MCF 10A (cell line): ENCODE measurements at regions of chr5 and their contacts with region 1.

Region 1: DNA sequence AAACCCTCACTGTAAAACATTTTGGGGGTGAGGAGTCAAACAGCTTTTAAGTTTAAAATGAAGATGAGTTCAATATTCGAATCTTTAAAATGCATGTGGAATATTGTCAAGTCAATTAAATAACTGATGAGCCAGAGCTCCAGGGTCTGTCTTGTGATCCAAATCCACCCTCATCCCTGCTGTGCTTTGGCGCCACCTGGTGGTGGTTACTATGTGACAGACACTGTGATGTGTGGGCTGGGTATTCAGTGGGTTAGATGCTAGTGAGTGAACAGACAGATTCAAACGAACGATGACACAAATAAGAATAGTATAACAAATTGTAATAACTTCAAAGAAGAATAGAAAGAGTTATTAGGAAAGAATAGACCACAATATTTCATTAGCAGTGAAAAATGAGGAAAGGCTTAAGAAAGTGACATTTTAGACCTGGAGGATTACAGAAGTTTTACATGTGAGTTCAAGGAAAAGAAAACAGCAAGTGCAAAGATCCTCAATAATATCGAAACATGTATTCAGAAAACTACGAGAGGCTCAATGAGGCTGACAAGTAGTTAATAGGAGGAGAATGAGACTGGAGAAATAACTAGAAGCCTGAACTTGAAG is 51.4 kb upstream of the CHSY3 start:
- DNase-seq: peak; percentile 94
- H3K4me3 Mint-ChIP-seq: no peak overlapping the region
- H3K27ac Mint-ChIP-seq: no peak overlapping the region
- H3K4me1 Mint-ChIP-seq: peaks cover 10% of the 10 kb centered on the region
- H3K27me3 Mint-ChIP-seq: peaks cover 11% of the 10 kb centered on the region
- CTCF ChIP-seq: peak; percentile 99

Region 2: DNA sequence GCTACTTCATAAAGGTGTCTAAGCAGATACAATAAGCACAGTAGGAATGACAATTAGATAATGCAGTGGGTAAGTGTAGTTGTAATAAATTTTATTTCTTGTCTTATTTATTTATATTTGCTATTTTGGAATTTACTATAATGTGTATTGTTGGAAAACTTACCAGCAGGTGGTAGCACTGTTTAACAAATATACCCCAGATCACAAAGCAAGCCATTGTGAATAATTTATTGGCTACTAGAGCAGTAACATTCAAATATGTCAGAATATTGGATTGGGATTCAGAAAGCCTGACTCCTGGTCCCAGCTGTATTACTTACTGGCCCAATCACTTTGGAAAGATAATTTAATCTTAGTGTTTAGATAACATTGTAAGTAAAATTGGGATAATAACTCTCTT is 680.3 kb before region 1 on chr5:
- CTCF ChIA-PET with region 1: interaction called, 3 read pairs
- POLR2A ChIA-PET with region 1: no interaction called
- intact Hi-C with region 1: loop called (anchors 5 kb)
- DNase-seq: peak; percentile 45
- H3K4me3 Mint-ChIP-seq: no peak overlapping the region
- H3K27ac Mint-ChIP-seq: no peak overlapping the region
- H3K4me1 Mint-ChIP-seq: no peaks in the 10 kb centered on the region
- H3K27me3 Mint-ChIP-seq: peaks cover 50% of the 10 kb centered on the region
- CTCF ChIP-seq: peak; percentile 38

Region 3: GRCh38 chr5:129541644-129542251 is 311.1 kb before region 1 on chr5:
- CTCF ChIA-PET with region 1: no interaction called
- POLR2A ChIA-PET with region 1: no interaction called
- intact Hi-C with region 1: loop called (anchors 2 kb)
- DNase-seq: peak; percentile 74
- H3K4me3 Mint-ChIP-seq: no peak overlapping the region
- H3K27ac Mint-ChIP-seq: no peak overlapping the region
- H3K4me1 Mint-ChIP-seq: no peaks in the 10 kb centered on the region
- H3K27me3 Mint-ChIP-seq: peaks cover 16% of the 10 kb centered on the region
- CTCF ChIP-seq: peak; percentile 60

Region 4: DNA sequence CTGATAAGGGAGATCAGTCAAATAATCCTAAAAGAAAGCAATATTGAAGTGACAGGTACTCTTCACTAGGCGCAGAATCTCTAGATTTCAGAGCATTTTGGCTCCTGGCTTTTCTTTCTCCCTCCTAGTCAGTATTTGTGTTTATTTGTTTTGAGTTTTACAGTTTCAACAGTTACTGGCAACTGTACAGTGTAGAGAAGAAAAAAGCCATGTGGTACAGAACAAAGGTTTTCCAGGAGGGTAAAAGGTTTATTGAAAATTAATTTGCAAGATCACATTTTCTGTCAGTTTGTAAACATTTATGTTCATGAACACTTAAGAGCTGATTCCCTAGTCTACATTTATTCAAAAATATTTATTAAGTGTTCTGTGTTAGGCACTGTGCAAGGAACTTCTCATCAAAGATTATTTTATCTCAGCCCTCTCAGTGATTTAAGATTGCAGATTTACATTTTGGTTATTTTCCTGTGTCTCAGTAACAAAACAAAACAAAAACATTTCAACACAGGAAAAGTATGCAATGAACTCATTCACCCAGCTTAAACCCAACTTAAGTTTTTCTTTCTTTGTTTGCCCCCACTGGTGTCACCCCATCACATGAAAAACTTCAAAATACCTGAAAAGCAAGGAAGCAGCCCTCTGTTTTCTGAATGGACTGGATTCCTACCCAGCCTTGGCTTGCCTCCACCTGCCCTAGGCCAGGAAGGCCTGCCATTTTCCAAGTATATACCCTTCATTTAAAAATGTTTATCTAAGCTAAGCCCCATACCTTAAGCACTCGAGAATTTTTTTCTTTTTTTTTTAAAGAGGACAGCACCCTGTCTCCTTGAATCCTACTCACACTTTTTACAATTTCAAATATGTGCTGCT is 92.0 kb before region 1 on chr5:
- CTCF ChIA-PET with region 1: interaction called, 931 read pairs
- POLR2A ChIA-PET with region 1: no interaction called
- intact Hi-C with region 1: no loop called
- DNase-seq: no peak
- H3K4me3 Mint-ChIP-seq: no peak overlapping the region
- H3K27ac Mint-ChIP-seq: no peak overlapping the region
- H3K4me1 Mint-ChIP-seq: no peaks in the 10 kb centered on the region
- H3K27me3 Mint-ChIP-seq: peaks cover 11% of the 10 kb centered on the region
- CTCF ChIP-seq: no peak

Region 5: GRCh38 chr5:129804705-129805104 is 48.1 kb before region 1 on chr5:
- CTCF ChIA-PET with region 1: interaction called, 34 read pairs
- POLR2A ChIA-PET with region 1: interaction called, 3 read pairs
- intact Hi-C with region 1: no loop called
- DNase-seq: no peak
- H3K4me3 Mint-ChIP-seq: no peak overlapping the region
- H3K27ac Mint-ChIP-seq: no peak overlapping the region
- H3K4me1 Mint-ChIP-seq: peaks cover 6% of the 10 kb centered on the region
- H3K27me3 Mint-ChIP-seq: no peaks in the 10 kb centered on the region
- CTCF ChIP-seq: no peak

Region 6: DNA sequence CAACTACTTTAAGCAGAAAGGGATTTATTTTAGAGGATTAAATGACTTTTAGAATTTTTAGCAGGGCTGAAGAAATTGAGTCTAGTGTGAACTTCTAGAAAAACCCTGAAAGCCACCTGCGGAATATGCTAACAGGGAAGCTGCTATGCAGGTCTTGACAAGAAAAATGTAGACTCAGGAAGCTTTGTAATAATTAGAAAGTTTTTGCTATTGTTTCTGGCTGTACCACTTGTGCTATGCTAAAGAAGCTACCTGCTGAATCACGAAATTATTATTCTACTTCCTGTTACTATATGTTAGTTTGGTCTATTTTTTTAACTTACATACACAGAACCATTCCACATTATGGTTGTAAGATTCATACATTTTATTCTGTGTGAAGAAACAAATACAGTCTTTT is 22.6 kb before region 1 on chr5:
- CTCF ChIA-PET with region 1: interaction called, 21 read pairs
- POLR2A ChIA-PET with region 1: interaction called, 3 read pairs
- intact Hi-C with region 1: no loop called
- DNase-seq: no peak
- H3K4me3 Mint-ChIP-seq: no peak overlapping the region
- H3K27ac Mint-ChIP-seq: no peak overlapping the region
- H3K4me1 Mint-ChIP-seq: no peaks in the 10 kb centered on the region
- H3K27me3 Mint-ChIP-seq: peaks cover 29% of the 10 kb centered on the region
- CTCF ChIP-seq: no peak

Region 7: DNA sequence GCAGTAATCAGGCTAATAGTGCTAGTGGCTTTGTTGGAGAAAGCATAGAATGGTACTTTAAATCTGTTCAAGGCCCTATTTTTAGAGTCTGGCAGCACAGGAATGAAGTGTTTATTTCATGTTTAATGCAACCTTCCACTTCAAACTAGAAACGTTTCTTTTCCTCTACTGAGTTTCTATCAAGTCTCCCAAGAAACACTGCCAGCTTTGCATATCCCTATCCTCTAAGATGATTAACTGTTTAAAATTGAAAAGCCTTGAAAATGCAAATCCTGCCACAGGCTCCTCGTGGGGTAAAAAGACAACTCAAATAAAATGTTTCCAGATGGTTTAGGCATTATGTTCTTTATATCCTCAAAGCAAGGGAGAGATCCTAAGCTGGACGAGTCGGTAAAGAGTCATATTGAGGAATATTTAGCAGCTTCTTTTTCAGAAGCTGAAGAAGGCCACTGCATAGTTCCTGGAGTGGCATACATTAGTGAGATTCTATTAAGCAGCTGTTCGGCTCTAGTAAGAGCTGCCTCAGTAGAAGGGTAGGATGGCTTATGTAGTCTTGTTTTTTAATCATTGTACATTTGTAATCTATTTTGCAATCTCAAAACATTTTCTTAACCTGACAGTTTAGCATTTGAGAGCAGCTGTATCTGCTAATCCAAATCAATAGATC is 302.6 kb after region 1 on chr5:
- CTCF ChIA-PET with region 1: no interaction called
- POLR2A ChIA-PET with region 1: no interaction called
- intact Hi-C with region 1: no loop called
- DNase-seq: no peak
- H3K4me3 Mint-ChIP-seq: no peak overlapping the region
- H3K27ac Mint-ChIP-seq: no peak overlapping the region
- H3K4me1 Mint-ChIP-seq: peaks cover 12% of the 10 kb centered on the region
- H3K27me3 Mint-ChIP-seq: no peaks in the 10 kb centered on the region
- CTCF ChIP-seq: no peak